Activated T-helper 2 cell treated with anti-CD3 and anti-CD28 coated beads, Interferon-gamma antibody, Interleukin-2, Interleukin-4, amounts not matched to agents 10 μg/mL and 5 μg/mL and 100 μg/mL, durations not matched to agents 14 hours and 24 hours and 36 hours (primary cell): ENCODE measurements at regions of chr10 and their contacts with region 1.

Region 1: DNA sequence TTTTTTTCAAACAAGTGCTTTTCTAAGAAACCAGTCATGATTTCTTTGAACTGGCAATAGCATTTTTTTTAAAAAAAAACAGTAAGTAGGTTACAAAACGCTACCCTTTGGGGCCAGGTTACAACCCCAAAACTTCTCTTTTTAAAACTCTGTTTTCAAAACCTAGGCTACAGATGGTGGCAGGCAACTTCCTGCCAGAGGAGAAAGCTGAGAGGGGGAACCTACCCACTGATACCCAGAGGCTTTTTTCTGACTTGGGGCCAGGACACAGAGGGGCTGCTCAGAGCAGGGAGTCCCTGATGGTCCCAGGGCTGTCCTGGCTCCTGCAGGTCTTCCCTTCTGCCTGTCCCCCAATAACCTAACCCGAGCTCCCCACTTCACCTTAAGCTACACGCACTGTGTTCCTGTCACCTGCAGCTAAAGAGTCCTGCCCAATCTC is 6.9 kb downstream of the STN1 start:
- DNase-seq: peak; percentile 58
- H3K4me3 Mint-ChIP-seq: peak overlapping the region; percentile 64
- H3K27ac Mint-ChIP-seq: peak overlapping the region; percentile 93
- H3K4me1 Mint-ChIP-seq: peaks cover 67% of the 10 kb centered on the region
- H3K27me3 Mint-ChIP-seq: no peaks in the 10 kb centered on the region

Region 2: GRCh38 chr10:103696411-103697145 is 214.5 kb before region 1 on chr10:
- intact Hi-C with region 1: no loop called
- DNase-seq: peak; percentile 74
- H3K4me3 Mint-ChIP-seq: peak overlapping the region; percentile 57
- H3K27ac Mint-ChIP-seq: peak overlapping the region; percentile 79
- H3K4me1 Mint-ChIP-seq: peaks cover 31% of the 10 kb centered on the region
- H3K27me3 Mint-ChIP-seq: no peaks in the 10 kb centered on the region

Region 3: GRCh38 chr10:103895411-103896186 is 15.4 kb before region 1 on chr10:
- intact Hi-C with region 1: loop called (anchors 2 kb)
- DNase-seq: no peak
- H3K4me3 Mint-ChIP-seq: peak overlapping the region; percentile 19
- H3K27ac Mint-ChIP-seq: peak overlapping the region; percentile 76
- H3K4me1 Mint-ChIP-seq: peaks cover 30% of the 10 kb centered on the region
- H3K27me3 Mint-ChIP-seq: no peaks in the 10 kb centered on the region

Region 4: DNA sequence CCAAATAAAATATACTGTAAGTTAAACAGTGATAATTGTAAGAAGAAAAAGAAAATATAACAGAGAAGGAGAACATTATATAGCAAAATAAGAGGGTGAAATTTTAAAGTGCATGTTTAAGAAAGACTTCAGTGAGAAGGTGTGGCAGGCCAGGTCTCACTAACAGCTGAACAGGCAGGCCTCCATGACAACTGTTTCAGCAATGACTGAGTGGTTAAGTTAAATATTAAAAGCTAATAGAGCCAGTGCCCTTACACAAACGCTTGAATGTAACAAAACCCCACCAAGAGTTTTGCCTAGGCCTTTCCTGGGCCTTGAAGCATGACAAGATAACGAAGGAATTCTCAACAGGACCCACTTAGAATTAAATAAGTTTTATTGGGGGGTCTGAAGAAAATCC is 288.5 kb after region 1 on chr10:
- intact Hi-C with region 1: no loop called
- DNase-seq: no peak
- H3K4me3 Mint-ChIP-seq: no peak overlapping the region
- H3K27ac Mint-ChIP-seq: no peak overlapping the region
- H3K4me1 Mint-ChIP-seq: no peaks in the 10 kb centered on the region
- H3K27me3 Mint-ChIP-seq: peaks cover 27% of the 10 kb centered on the region